Astrocyte of the cerebellum (primary cell): ENCODE measurements at regions of chr11 and their contacts with region 1.

Region 1: DNA sequence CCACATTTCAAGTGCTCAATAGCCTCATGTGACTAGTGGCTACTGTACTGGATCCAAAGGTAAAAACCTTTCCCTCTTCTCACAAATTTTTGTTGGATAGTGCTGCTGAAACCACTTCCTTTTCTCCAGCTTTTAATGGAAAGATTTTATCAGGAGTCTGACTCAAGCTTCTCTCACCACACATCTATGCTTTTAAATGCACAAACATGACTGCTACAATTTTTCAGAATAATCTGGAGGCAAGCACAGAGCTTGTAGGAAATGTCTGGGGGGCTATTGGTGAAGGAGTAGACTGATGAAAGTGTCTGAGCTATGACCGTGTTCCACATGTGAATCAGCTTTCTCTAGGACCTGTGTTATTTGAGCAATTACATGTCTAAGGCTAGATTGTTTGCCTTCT is 101.1 kb upstream of the FAT3 start:
- DNase-seq: peak; percentile 31
- H3K4me3 ChIP-seq: no peak overlapping the region
- CTCF ChIP-seq: no peak

Region 2: GRCh38 chr11:92083123-92083522 is 40.4 kb before region 1 on chr11:
- in situ Hi-C with region 1: no loop called
- DNase-seq: no peak
- H3K4me3 ChIP-seq: no peak overlapping the region
- CTCF ChIP-seq: no peak

Region 3: DNA sequence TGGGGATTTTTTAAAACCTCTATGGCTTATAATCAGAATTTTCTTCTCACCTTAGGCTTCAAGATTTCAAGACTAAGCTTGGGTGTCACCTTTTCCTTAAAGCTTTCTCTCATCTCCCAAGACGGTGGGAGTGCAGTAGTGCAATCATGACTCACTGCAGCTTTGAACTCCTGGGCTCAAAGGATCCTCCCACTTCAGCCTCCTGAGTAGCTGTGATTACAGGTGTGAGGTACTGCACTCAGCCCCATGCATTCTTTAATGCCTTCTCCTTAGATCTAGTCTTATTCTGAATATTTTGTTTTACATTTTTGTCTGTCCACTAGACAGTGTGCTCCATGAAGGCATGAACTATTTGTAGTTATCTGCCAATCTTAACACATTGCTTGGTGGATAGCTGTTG is 45.4 kb after region 1 on chr11:
- in situ Hi-C with region 1: loop called (anchors 5 kb)
- DNase-seq: no peak
- H3K4me3 ChIP-seq: no peak overlapping the region
- CTCF ChIP-seq: no peak

Region 4: DNA sequence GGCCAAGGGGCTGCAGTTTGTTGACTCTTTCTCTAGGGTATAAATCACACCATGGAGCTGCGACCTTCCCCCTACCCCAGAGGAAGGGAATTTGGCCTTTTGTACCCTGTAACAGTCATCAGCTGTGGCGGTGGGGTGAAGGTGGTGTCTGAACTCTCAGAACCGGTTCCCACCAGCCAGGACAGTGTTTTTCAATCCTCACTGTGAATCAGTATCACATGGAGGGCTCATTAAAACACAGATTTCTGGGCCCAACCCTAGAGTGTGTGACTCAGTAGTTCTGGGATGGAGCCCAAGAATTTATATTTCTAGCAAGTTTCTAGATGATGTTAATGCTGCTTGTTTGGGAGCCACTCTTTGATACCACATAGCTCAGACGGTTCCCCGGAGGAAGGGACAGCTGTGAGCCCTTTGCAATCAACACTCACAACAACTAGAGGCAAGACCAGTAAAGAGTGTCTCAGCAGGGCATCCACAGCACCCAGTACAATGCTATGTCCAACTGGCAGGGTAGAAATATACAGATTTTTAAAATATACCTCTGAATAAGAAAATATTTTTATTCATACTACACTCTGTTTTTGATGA is 57.2 kb after region 1 on chr11:
- in situ Hi-C with region 1: no loop called
- DNase-seq: peak; percentile 50
- H3K4me3 ChIP-seq: no peak overlapping the region
- CTCF ChIP-seq: no peak